ENCODE measurements at regions of chr2 and their contacts with region 1.

Region 1: DNA sequence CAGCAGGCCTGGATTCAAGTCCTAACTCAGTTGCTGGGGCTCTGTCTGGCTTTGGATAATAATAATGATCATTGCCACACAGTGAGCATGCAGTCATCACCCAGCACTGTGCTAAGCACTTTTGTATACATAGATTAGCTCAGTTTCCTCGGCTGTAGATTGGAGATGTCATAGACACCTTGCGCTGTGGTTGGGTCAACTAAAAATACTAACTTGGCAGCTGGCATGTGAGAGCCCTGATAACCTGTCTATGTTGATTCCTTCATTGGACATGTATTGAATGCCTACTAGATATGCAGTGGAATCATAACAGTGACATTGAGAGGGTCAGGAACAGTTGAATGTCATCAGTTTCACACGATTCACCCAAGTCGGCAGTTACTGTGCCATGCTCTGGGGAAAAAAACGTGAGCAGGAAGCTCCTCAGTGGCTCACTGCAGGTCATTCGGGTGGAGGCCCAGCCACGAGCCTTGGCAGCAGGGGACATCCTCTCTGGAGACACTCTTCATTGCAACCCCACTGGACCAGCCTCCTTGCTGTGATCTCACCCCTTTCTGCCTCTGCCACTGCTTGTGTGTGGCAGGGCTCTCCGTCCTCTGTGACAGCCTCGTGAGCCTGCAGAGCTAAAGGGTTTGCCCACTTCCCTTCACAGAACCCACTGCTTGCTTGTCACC is 85.3 kb downstream of the NPAS2 start:
- DNase-seq: no peak
- ATAC-seq: no peak
- H3K4me3 Mint-ChIP-seq: no peak overlapping the region
- H3K27ac Mint-ChIP-seq: no peak overlapping the region
- H3K4me1 Mint-ChIP-seq: 0 out of 2 replicates have a peak, but pooled peaks cover 3% of the 10 kb centered on the region
- H3K27me3 Mint-ChIP-seq: no peaks in the 10 kb centered on the region
- CTCF ChIP-seq: no peak

Region 2: GRCh38 chr2:100742277-100743254 is 162.7 kb before region 1 on chr2:
- CTCF ChIA-PET with region 1: no interaction called
- POLR2A ChIA-PET with region 1: no interaction called
- DNase-seq: no peak
- ATAC-seq: no peak
- H3K4me3 Mint-ChIP-seq: no peak overlapping the region
- H3K27ac Mint-ChIP-seq: no peak overlapping the region
- H3K4me1 Mint-ChIP-seq: no peaks in the 10 kb centered on the region
- H3K27me3 Mint-ChIP-seq: no peaks in the 10 kb centered on the region
- CTCF ChIP-seq: no peak

Region 3: GRCh38 chr2:100919316-100919875 is 14.1 kb after region 1 on chr2:
- CTCF ChIA-PET with region 1: interaction called, 10 read pairs
- POLR2A ChIA-PET with region 1: no interaction called
- DNase-seq: peak; percentile 67
- ATAC-seq: peak; percentile 96
- H3K4me3 Mint-ChIP-seq: no peak overlapping the region
- H3K27ac Mint-ChIP-seq: no peak overlapping the region
- H3K4me1 Mint-ChIP-seq: peaks cover 10% of the 10 kb centered on the region
- H3K27me3 Mint-ChIP-seq: no peaks in the 10 kb centered on the region; the same call in 1 of the 2 replicates
- CTCF ChIP-seq: peak; percentile 88

Region 4: GRCh38 chr2:101036562-101037457 is 131.5 kb after region 1 on chr2:
- CTCF ChIA-PET with region 1: no interaction called
- POLR2A ChIA-PET with region 1: no interaction called
- DNase-seq: no peak
- ATAC-seq: no peak
- H3K4me3 Mint-ChIP-seq: no peak overlapping the region
- H3K27ac Mint-ChIP-seq: peak overlapping the region; percentile 37
- H3K4me1 Mint-ChIP-seq: peaks cover 7% of the 10 kb centered on the region
- H3K27me3 Mint-ChIP-seq: no peaks in the 10 kb centered on the region
- CTCF ChIP-seq: 0 out of 2 replicates have a peak, but pooled peaks have one; percentile 9